ENCODE measurements at regions of chr7 and their contacts with region 1.

Region 1: GRCh38 chr7:2451171-2452073 is 24.8 kb downstream of the GRIFIN start:
- DNase-seq: peak; percentile 88
- ATAC-seq: peak; percentile 96
- H3K4me3 Mint-ChIP-seq: peak overlapping the region; percentile 49
- H3K27ac Mint-ChIP-seq: peak overlapping the region; percentile 46
- H3K4me1 Mint-ChIP-seq: peaks cover 6% of the 10 kb centered on the region
- H3K27me3 Mint-ChIP-seq: peaks cover 2% of the 10 kb centered on the region
- CTCF ChIP-seq: peak; percentile 79

Region 2: GRCh38 chr7:2313450-2314208 is 137.8 kb before region 1 on chr7:
- CTCF ChIA-PET with region 1: no interaction called
- POLR2A ChIA-PET with region 1: no interaction called
- intact Hi-C with region 1: no loop called
- DNase-seq: peak; percentile 13
- ATAC-seq: peak; percentile 5
- H3K4me3 Mint-ChIP-seq: no peak overlapping the region
- H3K27ac Mint-ChIP-seq: peak overlapping the region; percentile 78
- H3K4me1 Mint-ChIP-seq: peaks cover 14% of the 10 kb centered on the region
- H3K27me3 Mint-ChIP-seq: no peaks in the 10 kb centered on the region
- CTCF ChIP-seq: no peak

Region 3: GRCh38 chr7:2462731-2463130 is 11.3 kb after region 1 on chr7:
- CTCF ChIA-PET with region 1: interaction called, 146 read pairs
- POLR2A ChIA-PET with region 1: no interaction called
- intact Hi-C with region 1: no loop called
- DNase-seq: no peak
- ATAC-seq: no peak
- H3K4me3 Mint-ChIP-seq: no peak overlapping the region
- H3K27ac Mint-ChIP-seq: no peak overlapping the region
- H3K4me1 Mint-ChIP-seq: peaks cover 4% of the 10 kb centered on the region
- H3K27me3 Mint-ChIP-seq: no peaks in the 10 kb centered on the region
- CTCF ChIP-seq: no peak

Region 4: DNA sequence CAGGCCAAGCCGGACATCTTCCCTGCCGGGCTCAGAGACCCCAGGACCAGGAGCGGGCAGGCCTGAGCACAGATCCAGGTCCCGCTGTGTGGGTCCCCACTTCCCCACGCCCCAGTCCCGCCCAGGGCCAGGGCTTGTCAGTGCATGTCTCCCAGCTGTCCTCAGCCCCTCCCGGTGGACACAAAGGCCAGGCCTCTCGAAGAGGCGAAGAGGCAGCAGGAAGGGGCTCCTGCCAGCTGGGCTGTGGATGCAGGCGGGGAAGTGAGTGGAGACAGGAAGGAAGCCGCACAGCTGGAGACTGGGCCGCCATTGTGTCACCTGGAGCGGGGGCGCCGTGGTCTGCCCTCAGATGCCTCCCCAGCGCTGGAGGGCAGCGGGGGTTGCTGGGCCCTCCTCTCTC is 20.0 kb after region 1 on chr7:
- CTCF ChIA-PET with region 1: interaction called, 146 read pairs
- POLR2A ChIA-PET with region 1: interaction called, 4 read pairs
- intact Hi-C with region 1: no loop called
- DNase-seq: no peak
- ATAC-seq: no peak
- H3K4me3 Mint-ChIP-seq: no peak overlapping the region
- H3K27ac Mint-ChIP-seq: no peak overlapping the region
- H3K4me1 Mint-ChIP-seq: peaks cover 2% of the 10 kb centered on the region
- H3K27me3 Mint-ChIP-seq: peaks cover 4% of the 10 kb centered on the region
- CTCF ChIP-seq: no peak

Region 5: DNA sequence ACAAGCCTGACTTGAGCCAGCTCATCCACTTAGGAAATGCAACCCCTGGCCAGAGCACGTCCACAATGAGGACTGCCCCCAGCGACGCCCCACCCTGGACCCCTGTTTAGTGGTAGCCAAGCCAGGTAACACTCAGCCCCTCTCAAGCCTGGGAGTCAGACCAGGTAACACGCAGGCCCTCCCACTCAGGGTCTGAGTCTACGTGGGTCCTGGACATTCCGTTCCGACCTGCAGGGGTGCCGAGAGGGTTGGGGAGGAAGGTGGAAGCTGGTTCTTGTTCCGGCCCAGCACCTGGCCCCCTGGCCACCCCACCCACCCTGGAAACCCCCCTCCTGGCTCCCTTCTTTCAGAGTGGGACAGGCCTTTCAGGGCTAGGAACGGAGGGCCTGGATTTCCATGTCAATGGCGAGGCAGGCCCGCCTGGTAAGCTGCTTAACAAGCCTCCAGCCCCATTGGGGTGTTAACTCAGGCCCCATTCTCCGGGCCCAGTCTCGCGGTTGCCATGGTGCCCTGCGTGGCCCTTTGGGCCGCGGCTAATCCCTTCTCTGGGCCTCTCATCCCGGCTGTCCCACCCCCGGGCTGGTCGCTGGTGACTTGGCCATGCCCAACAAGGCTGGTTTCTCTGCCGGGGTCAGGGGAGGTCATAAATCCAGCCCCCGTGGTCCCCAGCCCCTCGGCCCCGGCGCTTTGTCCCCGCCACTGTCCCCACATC is 48.5 kb after region 1 on chr7:
- CTCF ChIA-PET with region 1: no interaction called
- POLR2A ChIA-PET with region 1: no interaction called
- intact Hi-C with region 1: no loop called
- DNase-seq: no peak
- ATAC-seq: no peak
- H3K4me3 Mint-ChIP-seq: no peak overlapping the region
- H3K27ac Mint-ChIP-seq: no peak overlapping the region
- H3K4me1 Mint-ChIP-seq: peaks cover 9% of the 10 kb centered on the region
- H3K27me3 Mint-ChIP-seq: peaks cover 4% of the 10 kb centered on the region
- CTCF ChIP-seq: no peak

Region 6: DNA sequence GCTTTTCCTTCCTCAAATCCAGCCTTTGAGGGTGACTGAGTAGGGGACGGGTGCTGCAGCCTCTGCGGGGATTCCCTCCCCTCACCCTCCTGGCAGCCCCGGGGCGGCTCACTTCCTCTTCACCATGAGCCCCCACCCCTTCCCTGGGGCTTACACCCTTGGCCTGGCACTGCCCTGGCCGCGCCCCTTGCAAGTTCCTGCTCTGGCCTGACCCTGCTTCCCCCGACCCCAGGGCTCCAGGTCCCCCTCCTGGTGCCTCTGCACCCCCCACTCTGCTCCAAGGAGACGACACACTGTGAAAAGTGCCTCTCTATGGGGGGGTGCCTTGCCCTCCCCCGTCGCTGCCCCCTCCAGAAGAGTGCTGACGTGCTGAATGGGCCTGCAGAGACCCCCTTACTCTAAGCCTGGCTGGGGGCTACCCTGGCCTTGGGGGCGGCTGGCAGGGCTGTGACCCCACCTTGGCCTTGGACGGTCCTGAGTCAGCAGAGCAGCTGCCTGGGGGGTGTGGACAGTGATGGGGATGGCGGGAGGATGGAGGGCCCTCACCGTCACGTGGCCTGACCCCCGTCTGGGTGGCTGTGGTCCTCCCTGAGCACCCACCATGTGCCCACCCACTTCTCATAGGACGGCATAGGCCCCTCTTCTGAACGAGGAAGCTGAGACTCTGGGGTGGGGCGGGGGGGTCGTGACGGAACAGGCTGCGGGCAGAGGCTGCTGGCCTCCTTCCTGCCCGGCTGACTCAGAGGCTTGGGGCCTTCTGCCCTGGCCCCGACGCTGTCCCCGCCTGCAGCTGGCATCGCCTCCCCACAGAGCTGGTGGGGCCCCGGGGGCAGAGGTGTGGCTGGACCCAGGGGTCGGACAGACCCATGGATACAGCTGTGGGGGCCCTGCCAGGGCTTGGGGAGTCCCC is 78.0 kb after region 1 on chr7:
- CTCF ChIA-PET with region 1: interaction called, 3 read pairs
- POLR2A ChIA-PET with region 1: no interaction called
- intact Hi-C with region 1: loop called (anchors 10 kb)
- DNase-seq: peak; percentile 81
- ATAC-seq: peak; percentile 58
- H3K4me3 Mint-ChIP-seq: peak overlapping the region; percentile 69
- H3K27ac Mint-ChIP-seq: peak overlapping the region; percentile 92
- H3K4me1 Mint-ChIP-seq: peaks cover 57% of the 10 kb centered on the region
- H3K27me3 Mint-ChIP-seq: no peaks in the 10 kb centered on the region
- CTCF ChIP-seq: no peak

Region 7: GRCh38 chr7:2608921-2609411 is 157.5 kb after region 1 on chr7:
- CTCF ChIA-PET with region 1: interaction called, 11 read pairs
- POLR2A ChIA-PET with region 1: no interaction called
- intact Hi-C with region 1: no loop called
- DNase-seq: peak; percentile 56
- ATAC-seq: peak; percentile 79
- H3K4me3 Mint-ChIP-seq: no peak overlapping the region
- H3K27ac Mint-ChIP-seq: no peak overlapping the region
- H3K4me1 Mint-ChIP-seq: peaks cover 7% of the 10 kb centered on the region
- H3K27me3 Mint-ChIP-seq: no peaks in the 10 kb centered on the region
- CTCF ChIP-seq: peak; percentile 46

Region 8: GRCh38 chr7:2680792-2681490 is 229.5 kb after region 1 on chr7:
- CTCF ChIA-PET with region 1: interaction called, 10 read pairs
- POLR2A ChIA-PET with region 1: no interaction called
- intact Hi-C with region 1: no loop called
- DNase-seq: peak; percentile 72
- ATAC-seq: peak; percentile 64
- H3K4me3 Mint-ChIP-seq: no peak overlapping the region
- H3K27ac Mint-ChIP-seq: no peak overlapping the region
- H3K4me1 Mint-ChIP-seq: no peaks in the 10 kb centered on the region
- H3K27me3 Mint-ChIP-seq: peaks cover 5% of the 10 kb centered on the region
- CTCF ChIP-seq: peak; percentile 70

Measured in activated CD8-positive, alpha-beta T cell treated with anti-CD3 and anti-CD28 coated beads for 36 hours (primary cell).